MCF 10A (cell line): ENCODE measurements at regions of chr5 and their contacts with region 1.

Region 1: GRCh38 chr5:32837211-32837610 is 126.1 kb downstream of the NPR3 start:
- DNase-seq: peak; percentile 27
- H3K4me3 Mint-ChIP-seq: no peak overlapping the region
- H3K27ac Mint-ChIP-seq: no peak overlapping the region
- H3K4me1 Mint-ChIP-seq: no peaks in the 10 kb centered on the region
- H3K27me3 Mint-ChIP-seq: no peaks in the 10 kb centered on the region
- CTCF ChIP-seq: no peak

Region 2: GRCh38 chr5:32767948-32768427 is 69.2 kb before region 1 on chr5:
- CTCF ChIA-PET with region 1: no interaction called
- POLR2A ChIA-PET with region 1: no interaction called
- intact Hi-C with region 1: no loop called
- DNase-seq: peak; percentile 99
- H3K4me3 Mint-ChIP-seq: peak overlapping the region; percentile 43
- H3K27ac Mint-ChIP-seq: peak overlapping the region; percentile 89
- H3K4me1 Mint-ChIP-seq: peaks cover 22% of the 10 kb centered on the region
- H3K27me3 Mint-ChIP-seq: no peaks in the 10 kb centered on the region
- CTCF ChIP-seq: no peak

Region 3: GRCh38 chr5:32852535-32852934 is 15.3 kb after region 1 on chr5:
- CTCF ChIA-PET with region 1: interaction called, 10 read pairs
- POLR2A ChIA-PET with region 1: no interaction called
- intact Hi-C with region 1: no loop called
- DNase-seq: peak; percentile 76
- H3K4me3 Mint-ChIP-seq: no peak overlapping the region
- H3K27ac Mint-ChIP-seq: no peak overlapping the region
- H3K4me1 Mint-ChIP-seq: no peaks in the 10 kb centered on the region
- H3K27me3 Mint-ChIP-seq: no peaks in the 10 kb centered on the region
- CTCF ChIP-seq: no peak